BJ (cell line): ENCODE measurements at regions of chr4 and their contacts with region 1.

Region 1: DNA sequence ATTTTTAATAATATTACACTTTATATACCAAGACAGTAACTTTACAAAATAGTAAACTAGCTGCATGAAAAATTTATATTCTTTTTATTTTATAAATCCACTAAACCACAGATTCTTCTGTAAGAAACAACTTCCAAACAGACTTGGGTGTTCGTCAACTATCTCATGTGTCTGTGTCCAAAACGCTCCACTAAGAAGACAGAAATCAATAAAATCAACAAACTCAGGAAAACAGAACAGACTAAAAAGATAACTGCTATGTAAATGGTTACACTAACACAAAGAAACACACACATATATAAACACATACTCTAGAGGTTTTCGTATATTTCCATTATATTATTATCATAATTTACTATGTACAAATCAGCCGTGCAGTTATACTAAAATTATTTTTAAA is 158.4 kb downstream of the PPP3CA start:
- DNase-seq: no peak
- H3K4me3 ChIP-seq: no peak overlapping the region
- H3K27me3 ChIP-seq: no peaks in the 10 kb centered on the region
- CTCF ChIP-seq: no peak

Region 2: GRCh38 chr4:101158134-101158482 is 30.8 kb before region 1 on chr4:
- CTCF ChIA-PET with region 1: no interaction called
- POLR2A ChIA-PET with region 1: interaction called, 12 read pairs
- DNase-seq: no peak
- H3K4me3 ChIP-seq: no peak overlapping the region
- H3K27me3 ChIP-seq: no peaks in the 10 kb centered on the region
- CTCF ChIP-seq: no peak

Region 3: GRCh38 chr4:101205916-101206315 is 17.0 kb after region 1 on chr4:
- CTCF ChIA-PET with region 1: no interaction called
- POLR2A ChIA-PET with region 1: no interaction called
- DNase-seq: no peak
- H3K4me3 ChIP-seq: no peak overlapping the region
- H3K27me3 ChIP-seq: no peaks in the 10 kb centered on the region
- CTCF ChIP-seq: no peak